CD4-positive, alpha-beta memory T cell (primary cell): ENCODE measurements at regions of chr10 and their contacts with region 1.

Region 1: DNA sequence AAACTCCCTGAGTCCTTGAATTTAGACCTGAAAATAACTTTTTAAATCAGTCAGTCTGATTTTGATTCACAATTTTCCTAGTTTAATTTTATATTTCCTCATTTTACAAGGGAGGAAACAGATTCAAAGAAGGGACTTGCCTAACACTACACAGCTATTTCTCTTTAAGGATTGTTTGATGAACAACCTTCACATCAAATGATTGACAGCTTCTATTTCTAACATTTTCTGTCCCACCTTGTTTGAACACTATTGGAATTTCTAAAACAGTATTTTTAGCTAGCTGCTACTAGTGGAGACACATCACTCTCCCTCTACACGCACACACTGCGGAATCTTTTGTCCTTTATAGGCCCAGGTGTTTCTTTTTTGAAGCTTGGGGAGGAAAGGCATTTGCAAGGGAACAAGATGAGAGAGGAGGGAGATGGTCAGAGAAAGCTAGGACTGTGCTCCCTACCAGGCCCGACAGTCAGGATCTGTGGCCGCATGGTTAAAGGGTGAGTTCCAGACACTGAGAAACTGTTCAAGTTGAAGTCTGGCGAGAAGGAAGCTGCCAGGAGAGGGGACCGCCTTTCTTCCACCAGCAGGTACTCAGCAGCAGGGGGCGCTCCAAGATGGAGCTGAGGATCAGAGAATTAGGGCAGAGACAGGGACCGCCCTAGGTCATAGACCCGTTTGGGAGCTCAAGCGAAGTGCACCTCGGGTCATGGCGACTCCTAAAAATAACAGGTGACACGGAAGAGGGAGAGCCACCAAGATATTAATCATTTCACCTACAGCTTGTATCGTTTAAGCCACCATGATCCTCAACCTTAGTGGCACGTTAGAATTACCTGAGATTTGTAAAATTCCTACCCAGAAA is 49.7 kb downstream of the DNAJC12 start:
- DNase-seq: peak; percentile 53 to 64 (median 56)
- H3K4me3 ChIP-seq: no peak overlapping the region
- H3K4me3 Mint-ChIP-seq: peak overlapping the region in 4 of 8 donors; percentile 8 to 70 (median 53)
- H3K27ac ChIP-seq: no peak overlapping the region
- H3K27ac Mint-ChIP-seq: peak overlapping the region in 4 of 7 donors; percentile 2 to 80 (median 15)
- H3K4me1 ChIP-seq: peaks cover 40% of the 10 kb centered on the region
- H3K4me1 Mint-ChIP-seq: peaks cover 25 to 40% (median 30%) of the 10 kb centered on the region in 4 donors
- H3K27me3 ChIP-seq: no peaks in the 10 kb centered on the region
- H3K27me3 Mint-ChIP-seq: no peaks in the 10 kb centered on the region

Region 2: GRCh38 chr10:67697724-67698131 is 90.5 kb before region 1 on chr10:
- CTCF ChIA-PET with region 1: interaction called, 89 read pairs
- POLR2A ChIA-PET with region 1: no interaction called
- intact Hi-C with region 1: no loop called
- DNase-seq: peak; percentile 40 to 61 (median 56)
- H3K4me3 ChIP-seq: no peak overlapping the region
- H3K4me3 Mint-ChIP-seq: no peak overlapping the region
- H3K27ac ChIP-seq: no peak overlapping the region
- H3K27ac Mint-ChIP-seq: peak overlapping the region in 1 of 7 donors; percentile 52
- H3K4me1 ChIP-seq: peaks cover 5% of the 10 kb centered on the region
- H3K4me1 Mint-ChIP-seq: peaks cover 2 to 19% (median 13%) of the 10 kb centered on the region in 4 donors
- H3K27me3 ChIP-seq: peaks cover 14% of the 10 kb centered on the region
- H3K27me3 Mint-ChIP-seq: peaks cover 23% of the 10 kb centered on the region in 2 donors

Region 3: GRCh38 chr10:67803588-67804394 is 15.5 kb after region 1 on chr10:
- CTCF ChIA-PET with region 1: interaction called, 15 read pairs
- POLR2A ChIA-PET with region 1: no interaction called
- intact Hi-C with region 1: no loop called
- DNase-seq: no peak
- H3K4me3 ChIP-seq: no peak overlapping the region
- H3K4me3 Mint-ChIP-seq: no peak overlapping the region
- H3K27ac ChIP-seq: no peak overlapping the region
- H3K27ac Mint-ChIP-seq: no peak overlapping the region
- H3K4me1 ChIP-seq: no peaks in the 10 kb centered on the region
- H3K4me1 Mint-ChIP-seq: no peaks in the 10 kb centered on the region
- H3K27me3 ChIP-seq: no peaks in the 10 kb centered on the region
- H3K27me3 Mint-ChIP-seq: peaks cover 0 to 2% of the 10 kb centered on the region in 2 donors

Region 4: DNA sequence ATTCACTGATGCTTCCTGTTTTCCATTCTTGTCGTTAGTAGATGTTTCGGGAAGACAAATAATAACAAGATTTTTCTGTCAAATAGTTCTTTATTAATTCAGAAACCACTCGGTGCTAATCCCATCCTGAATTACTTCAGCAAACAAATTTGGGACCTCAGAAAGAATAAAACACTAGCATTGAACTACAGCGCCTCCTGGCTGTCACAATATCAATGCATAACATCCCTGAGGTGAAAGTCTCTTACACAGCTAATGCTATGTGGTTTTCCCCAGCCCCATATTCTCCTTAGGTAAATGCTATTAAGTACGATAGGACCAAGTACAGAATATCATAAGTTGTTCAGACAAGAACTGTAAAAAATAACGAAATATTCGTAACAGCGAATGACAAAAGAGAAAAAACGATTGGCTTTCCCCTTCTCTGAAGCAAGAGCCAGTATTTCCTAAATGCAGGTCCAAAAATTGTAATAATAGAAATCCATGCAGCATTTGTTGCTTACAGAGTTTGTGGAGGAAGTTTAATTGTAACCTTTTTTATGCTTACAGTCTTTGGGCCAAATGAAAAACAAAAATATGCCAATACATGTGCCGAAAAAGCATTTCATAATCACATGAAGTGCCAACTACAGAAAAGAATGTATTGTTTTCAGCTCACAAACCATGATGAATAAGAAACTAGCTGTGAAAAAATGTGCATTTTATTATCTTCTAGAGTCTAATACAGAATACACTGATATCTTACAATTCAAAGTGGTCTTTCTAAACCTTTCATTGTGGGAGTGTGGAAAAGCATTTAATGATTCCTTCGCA is 368.3 kb after region 1 on chr10:
- CTCF ChIA-PET with region 1: interaction called, 99 read pairs
- POLR2A ChIA-PET with region 1: interaction called, 4 read pairs
- intact Hi-C with region 1: loop called (anchors 1 kb)
- DNase-seq: peak; percentile 51 to 55 (median 53)
- H3K4me3 ChIP-seq: no peak overlapping the region
- H3K4me3 Mint-ChIP-seq: no peak overlapping the region
- H3K27ac ChIP-seq: no peak overlapping the region
- H3K27ac Mint-ChIP-seq: no peak overlapping the region
- H3K4me1 ChIP-seq: no peaks in the 10 kb centered on the region
- H3K4me1 Mint-ChIP-seq: peaks cover 0 to 1% (median 0%) of the 10 kb centered on the region in 4 donors
- H3K27me3 ChIP-seq: no peaks in the 10 kb centered on the region
- H3K27me3 Mint-ChIP-seq: peaks cover 0 to 7% of the 10 kb centered on the region in 2 donors

Region 5: DNA sequence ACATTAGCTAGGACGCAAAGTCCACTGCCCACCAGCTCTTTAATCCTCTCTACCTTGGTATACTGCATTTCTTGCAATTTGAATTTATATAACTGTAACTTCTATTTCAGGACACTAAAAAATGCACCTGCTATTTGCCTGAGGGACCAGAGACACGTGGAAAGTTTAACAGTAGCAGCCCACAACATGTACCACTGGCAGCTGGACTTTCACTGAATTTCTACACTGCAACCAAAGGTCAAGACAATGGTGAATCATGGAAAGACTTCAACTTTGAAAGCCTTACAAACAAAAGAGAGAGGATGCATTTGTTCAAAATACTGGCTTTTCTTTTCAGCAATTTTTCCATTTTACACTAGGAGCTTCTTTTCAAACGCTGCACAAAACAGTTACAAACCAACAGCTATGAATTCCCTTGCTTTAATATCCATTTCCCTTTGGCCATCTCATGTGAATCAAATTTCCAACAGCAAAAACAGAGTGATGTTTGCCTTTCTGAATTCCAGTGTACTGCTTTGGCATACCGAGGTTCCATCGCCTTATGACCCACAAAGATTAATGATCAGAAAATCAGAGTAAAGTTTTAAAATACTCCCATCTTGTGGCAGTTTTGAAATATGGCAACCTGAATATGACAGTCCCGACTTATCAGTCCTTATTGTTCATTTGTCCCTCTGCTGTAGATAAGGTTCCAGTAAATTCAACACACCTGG is 513.7 kb after region 1 on chr10:
- CTCF ChIA-PET with region 1: interaction called, 18 read pairs
- POLR2A ChIA-PET with region 1: no interaction called
- intact Hi-C with region 1: no loop called
- DNase-seq: peak in 4 of 5 donors; percentile 16 to 29 (median 24)
- H3K4me3 ChIP-seq: no peak overlapping the region
- H3K4me3 Mint-ChIP-seq: no peak overlapping the region
- H3K27ac ChIP-seq: no peak overlapping the region
- H3K27ac Mint-ChIP-seq: no peak overlapping the region
- H3K4me1 ChIP-seq: no peaks in the 10 kb centered on the region
- H3K4me1 Mint-ChIP-seq: peaks cover 0 to 1% (median 0%) of the 10 kb centered on the region in 4 donors
- H3K27me3 ChIP-seq: no peaks in the 10 kb centered on the region
- H3K27me3 Mint-ChIP-seq: no peaks in the 10 kb centered on the region